Activated CD4-positive, alpha-beta memory T cell treated with anti-CD3 and anti-CD28 coated beads for 36 hours (primary cell): ENCODE measurements at regions of chr3 and their contacts with region 1.

Region 1: GRCh38 chr3:18438586-18438985 is 13.4 kb upstream of the SATB1 start:
- DNase-seq: peak; percentile 82
- H3K4me3 Mint-ChIP-seq: peak overlapping the region; percentile 81
- H3K27ac Mint-ChIP-seq: peak overlapping the region; percentile 99
- H3K4me1 Mint-ChIP-seq: peaks cover 40% of the 10 kb centered on the region
- H3K27me3 Mint-ChIP-seq: no peaks in the 10 kb centered on the region

Region 2: DNA sequence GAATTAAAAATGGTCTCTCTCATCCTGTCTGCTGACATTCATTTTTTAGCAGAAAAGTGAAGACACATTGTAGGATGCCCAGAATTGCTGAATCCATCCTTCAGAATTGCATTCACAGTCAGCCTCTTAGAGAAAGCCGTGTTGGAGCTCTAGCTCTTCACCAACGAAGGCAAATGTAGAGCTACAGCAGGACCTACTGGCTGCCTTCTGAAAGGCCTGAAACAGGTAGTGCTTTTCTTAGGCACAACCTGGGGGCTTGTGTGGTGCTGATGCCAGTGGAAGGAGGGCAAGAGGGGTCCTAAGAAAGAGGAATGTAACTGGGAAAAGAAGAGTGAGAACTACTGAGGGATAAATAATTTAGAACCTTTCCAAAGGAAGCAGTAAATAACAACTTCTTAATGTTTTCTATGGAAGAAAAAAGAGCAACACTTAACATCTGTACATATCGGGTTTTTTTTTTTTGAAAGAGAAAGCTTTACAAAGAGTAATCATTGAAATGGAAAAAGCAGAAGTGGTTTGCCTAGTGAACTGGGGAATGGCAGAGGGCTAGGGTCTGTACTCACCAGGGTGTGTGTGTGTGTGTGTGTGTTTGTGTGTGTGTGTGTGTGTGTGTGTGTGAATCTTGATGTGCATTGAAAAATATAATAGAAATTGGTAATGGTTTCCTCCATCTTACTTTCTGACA is 311.3 kb before region 1 on chr3:
- CTCF ChIA-PET with region 1: no interaction called
- POLR2A ChIA-PET with region 1: no interaction called
- intact Hi-C with region 1: no loop called
- DNase-seq: no peak
- H3K4me3 Mint-ChIP-seq: no peak overlapping the region
- H3K27ac Mint-ChIP-seq: no peak overlapping the region
- H3K4me1 Mint-ChIP-seq: no peaks in the 10 kb centered on the region
- H3K27me3 Mint-ChIP-seq: no peaks in the 10 kb centered on the region

Region 3: DNA sequence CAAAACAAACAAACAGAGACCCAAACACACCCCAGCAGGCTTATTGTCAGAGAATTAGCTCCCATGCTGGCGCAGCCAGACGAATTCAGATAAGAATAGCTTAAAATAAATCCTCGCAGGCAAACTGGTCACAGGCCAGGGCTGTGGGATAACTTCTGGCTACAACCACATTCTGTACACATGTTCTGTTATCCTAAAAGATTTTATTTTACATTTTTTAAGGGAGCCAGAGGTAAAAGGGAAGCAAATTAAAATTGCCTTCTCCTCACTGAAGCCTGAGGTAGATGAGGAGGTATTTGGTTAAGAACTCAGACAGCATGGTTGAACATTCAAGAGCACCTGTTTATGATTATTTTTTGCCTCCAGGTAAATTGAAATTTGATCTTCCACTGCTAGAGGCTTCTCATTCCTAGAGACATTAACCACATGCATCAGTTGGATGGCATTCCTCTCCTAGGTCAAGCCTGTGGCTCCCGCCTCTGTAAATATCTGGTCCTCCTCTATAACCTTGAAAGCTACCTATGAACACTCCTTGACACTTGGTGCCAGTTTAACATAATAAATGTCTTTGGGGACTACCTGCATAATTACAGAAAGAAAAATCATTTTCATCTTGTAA is 203.8 kb before region 1 on chr3:
- CTCF ChIA-PET with region 1: no interaction called
- POLR2A ChIA-PET with region 1: no interaction called
- intact Hi-C with region 1: no loop called
- DNase-seq: no peak
- H3K4me3 Mint-ChIP-seq: no peak overlapping the region
- H3K27ac Mint-ChIP-seq: no peak overlapping the region
- H3K4me1 Mint-ChIP-seq: peaks cover 6% of the 10 kb centered on the region
- H3K27me3 Mint-ChIP-seq: peaks cover 23% of the 10 kb centered on the region

Region 4: DNA sequence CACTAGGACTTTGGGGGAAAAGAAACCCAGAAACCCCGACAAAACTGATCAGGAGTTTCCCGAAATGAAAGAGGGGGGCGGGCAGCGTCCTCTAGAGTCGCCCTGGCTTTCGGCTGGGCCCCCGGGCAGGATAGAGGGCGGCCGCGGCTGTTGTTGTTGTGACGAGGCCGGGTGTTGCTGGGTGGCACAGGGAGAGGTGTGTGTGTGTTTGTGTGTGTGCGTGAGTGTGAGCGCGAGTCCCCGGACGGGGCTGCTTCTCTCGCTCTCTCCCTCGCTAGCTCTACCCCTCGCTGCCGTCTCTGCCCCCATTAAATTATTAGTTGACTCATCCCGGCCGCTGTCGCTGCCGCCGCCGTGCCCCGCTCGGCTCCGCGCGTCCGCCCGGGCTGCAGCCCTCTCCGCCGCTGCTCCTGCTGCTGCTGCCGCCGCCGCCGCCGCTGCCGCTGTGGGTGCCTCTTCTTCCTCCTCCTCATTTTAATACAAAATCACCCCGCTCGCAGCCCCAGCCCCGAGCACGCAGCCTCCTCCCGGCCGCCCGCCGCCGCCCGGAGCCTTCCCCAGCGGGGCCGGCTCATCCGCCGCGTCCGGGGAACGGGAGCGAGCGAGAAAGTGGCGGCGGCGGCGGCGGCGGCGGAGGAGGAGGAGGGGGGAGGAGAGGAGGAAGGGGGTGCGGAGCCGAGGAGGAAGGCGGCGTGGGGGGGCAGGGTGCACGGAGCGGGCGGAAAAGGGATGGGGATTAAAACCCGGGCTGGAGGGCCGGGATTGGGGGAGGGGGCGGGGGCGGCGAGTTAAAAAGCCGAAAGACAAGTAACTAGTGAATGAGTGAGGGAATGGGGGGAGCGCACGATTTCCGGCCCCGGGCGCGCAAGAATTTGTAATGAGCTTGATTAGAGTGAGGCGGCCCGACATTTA is 13.6 kb before region 1 on chr3 and contains the start of gene SATB1:
- CTCF ChIA-PET with region 1: interaction called, 4 read pairs
- POLR2A ChIA-PET with region 1: interaction called, 95 read pairs
- intact Hi-C with region 1: loop called (anchors 1 kb)
- DNase-seq: peak; percentile 78
- H3K4me3 Mint-ChIP-seq: peak within 1 kb of the TSS; percentile 86
- H3K27ac Mint-ChIP-seq: peak within 1 kb of the TSS; percentile 84
- H3K4me1 Mint-ChIP-seq: peaks cover 74% of the 10 kb centered on the region
- H3K27me3 Mint-ChIP-seq: no peaks in the 10 kb centered on the region
- total RNA-seq, gene SATB1: 546 to 561 TPM